BJ (cell line): ENCODE measurements at regions of chr9 and their contacts with region 1.

Region 1: DNA sequence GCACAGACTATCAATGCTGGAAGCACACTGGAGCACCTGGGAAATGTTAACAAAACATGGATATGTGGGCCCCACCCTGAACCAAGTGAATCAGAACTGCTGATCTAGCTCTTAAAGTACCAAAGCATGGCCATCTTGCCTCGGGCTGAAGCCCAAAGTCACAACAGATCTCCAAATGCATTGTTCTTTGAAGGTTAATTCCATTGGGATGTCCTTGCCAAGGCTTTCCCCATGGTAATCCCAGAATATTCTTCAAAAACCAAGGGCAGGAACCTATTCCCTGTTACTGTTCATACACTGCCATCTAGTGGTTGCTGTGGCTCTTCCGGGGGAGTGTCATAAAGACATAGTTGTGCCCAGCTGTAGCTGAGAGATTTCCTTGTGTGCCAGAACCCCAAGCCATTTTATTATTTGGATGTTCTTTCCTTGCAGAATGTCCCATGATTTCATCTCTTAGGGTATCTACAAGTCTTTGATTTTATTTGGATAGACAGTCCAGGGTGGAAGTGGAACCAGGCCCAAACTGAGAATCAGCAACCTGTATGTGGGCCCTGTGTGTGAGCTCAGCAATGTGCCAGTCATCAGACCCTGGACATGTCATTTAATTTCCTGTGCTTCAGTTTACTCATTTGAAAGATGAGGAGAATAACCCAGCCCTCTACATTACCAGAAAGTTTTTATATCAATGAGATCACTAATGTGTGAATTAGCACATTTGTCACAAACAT is 290.0 kb downstream of the ACTL7B start:
- DNase-seq: peak; percentile 39
- H3K4me3 ChIP-seq: no peak overlapping the region
- H3K27me3 ChIP-seq: no peaks in the 10 kb centered on the region; the same call in 1 of the 2 replicates
- CTCF ChIP-seq: peak; percentile 84

Region 2: DNA sequence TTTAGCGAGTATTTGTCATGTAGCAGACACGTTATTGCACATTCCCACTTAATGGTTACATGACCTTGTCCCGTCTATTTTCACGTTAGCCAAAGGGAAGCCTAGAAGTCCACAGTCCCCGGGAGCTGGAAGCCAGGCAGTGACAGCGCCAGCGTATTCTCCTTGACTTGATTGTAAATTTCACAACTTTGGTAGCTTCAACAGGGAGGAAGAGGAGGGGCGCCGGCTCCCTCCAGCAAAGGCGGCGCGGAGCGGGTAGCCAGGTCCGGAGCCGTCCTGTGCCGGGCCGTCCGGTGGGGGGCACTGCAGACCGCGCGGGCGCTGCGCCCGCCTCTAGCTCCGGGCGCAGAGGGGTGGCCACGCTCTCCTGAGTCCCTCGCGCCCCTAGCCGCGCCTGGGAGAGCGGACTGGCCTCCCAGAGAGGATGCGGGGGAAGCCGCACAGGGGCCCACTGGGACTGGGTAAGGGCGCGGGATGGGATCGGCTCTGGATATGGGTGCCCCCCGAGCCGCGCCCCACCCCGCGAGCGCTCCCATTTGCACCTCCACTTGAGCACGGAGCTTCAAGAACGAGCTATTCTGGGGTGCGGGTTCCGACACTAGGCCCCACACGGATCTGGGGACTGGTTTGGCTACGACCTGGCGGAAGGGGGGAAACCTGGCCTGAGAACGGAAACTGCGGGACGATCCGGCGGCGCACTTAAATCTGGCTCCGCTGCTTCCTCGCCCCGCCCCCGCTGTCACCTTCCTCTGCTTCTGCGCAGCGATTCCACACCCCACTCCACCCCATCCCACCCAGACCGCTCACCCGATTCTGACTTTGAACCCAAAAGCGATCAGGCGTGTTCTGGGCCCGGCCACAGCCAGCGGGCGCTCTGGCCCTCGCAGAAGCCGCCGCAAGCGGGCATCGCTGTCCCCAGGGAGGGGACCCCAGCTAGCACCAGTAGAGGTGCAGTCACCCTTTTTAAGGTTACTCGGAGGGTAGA is 1100.1 kb before region 1 on chr9:
- CTCF ChIA-PET with region 1: interaction called, 44 read pairs
- POLR2A ChIA-PET with region 1: no interaction called
- DNase-seq: no peak
- H3K4me3 ChIP-seq: peak overlapping the region; percentile 65
- H3K27me3 ChIP-seq: no peaks in the 10 kb centered on the region
- CTCF ChIP-seq: peak; percentile 69

Region 3: DNA sequence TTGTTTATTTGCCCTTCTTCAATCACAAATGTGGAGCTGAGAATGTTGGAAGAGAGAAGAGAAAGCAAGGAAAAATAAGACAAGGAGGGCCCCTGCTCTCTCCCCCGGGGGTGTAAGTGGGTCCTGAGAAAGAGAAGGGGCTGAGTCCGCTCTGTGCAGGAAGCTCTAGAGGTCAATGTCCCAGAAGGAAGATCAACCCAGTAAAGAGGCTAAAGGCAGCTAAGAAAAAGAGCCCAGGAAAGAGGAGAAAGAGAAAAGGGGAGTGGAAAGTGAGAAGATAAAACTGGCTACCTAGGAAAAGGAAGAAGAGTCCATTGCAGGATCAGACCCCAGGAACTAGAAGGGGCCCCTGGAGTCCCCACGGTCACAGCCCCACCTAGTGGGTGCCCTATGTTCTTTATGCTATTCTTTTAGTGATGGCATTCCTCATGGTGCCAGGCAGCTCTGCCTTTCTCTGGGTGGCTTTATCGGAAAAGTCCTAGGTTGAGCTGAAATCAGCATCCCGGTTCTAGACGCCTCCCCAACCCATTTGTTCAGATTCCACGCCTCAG is 293.4 kb before region 1 on chr9:
- CTCF ChIA-PET with region 1: interaction called, 19 read pairs
- POLR2A ChIA-PET with region 1: no interaction called
- DNase-seq: no peak
- H3K4me3 ChIP-seq: peak overlapping the region; percentile 12; the same call in 1 of the 2 replicates
- H3K27me3 ChIP-seq: no peaks in the 10 kb centered on the region
- CTCF ChIP-seq: peak; percentile 65

Region 4: GRCh38 chr9:108444400-108445358 is 121.1 kb before region 1 on chr9:
- CTCF ChIA-PET with region 1: interaction called, 22 read pairs
- POLR2A ChIA-PET with region 1: no interaction called
- DNase-seq: peak; percentile 93
- H3K4me3 ChIP-seq: peak overlapping the region; percentile 5; the same call in 1 of the 2 replicates
- H3K27me3 ChIP-seq: no peaks in the 10 kb centered on the region
- CTCF ChIP-seq: no peak

Region 5: DNA sequence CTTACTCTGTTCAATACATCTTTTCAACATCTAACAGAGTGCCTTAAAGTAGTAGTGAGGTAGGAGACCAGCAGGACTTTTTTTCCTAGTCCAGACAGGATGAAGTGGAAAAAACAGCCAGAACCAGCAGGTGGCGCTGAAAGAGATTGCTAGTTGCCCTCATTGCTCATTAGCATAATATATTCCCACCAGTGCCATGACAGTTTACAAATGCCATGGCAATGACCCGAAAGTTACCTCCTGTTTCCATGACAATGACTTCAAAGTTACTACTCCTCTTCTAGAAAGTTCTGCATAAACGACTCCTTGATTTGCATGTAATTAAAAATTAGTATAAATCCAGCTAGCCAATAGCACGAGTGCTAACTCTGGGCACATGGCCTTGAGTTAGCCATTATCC is 97.4 kb before region 1 on chr9:
- CTCF ChIA-PET with region 1: interaction called, 12 read pairs
- POLR2A ChIA-PET with region 1: no interaction called
- DNase-seq: no peak
- H3K4me3 ChIP-seq: no peak overlapping the region
- H3K27me3 ChIP-seq: no peaks in the 10 kb centered on the region
- CTCF ChIP-seq: peak; percentile 43

Region 6: GRCh38 chr9:108579757-108580439 is 14.1 kb after region 1 on chr9:
- CTCF ChIA-PET with region 1: no interaction called
- POLR2A ChIA-PET with region 1: no interaction called
- DNase-seq: no peak
- H3K4me3 ChIP-seq: no peak overlapping the region
- H3K27me3 ChIP-seq: peaks cover 2% of the 10 kb centered on the region; the same call in 1 of the 2 replicates
- CTCF ChIP-seq: no peak

Region 7: DNA sequence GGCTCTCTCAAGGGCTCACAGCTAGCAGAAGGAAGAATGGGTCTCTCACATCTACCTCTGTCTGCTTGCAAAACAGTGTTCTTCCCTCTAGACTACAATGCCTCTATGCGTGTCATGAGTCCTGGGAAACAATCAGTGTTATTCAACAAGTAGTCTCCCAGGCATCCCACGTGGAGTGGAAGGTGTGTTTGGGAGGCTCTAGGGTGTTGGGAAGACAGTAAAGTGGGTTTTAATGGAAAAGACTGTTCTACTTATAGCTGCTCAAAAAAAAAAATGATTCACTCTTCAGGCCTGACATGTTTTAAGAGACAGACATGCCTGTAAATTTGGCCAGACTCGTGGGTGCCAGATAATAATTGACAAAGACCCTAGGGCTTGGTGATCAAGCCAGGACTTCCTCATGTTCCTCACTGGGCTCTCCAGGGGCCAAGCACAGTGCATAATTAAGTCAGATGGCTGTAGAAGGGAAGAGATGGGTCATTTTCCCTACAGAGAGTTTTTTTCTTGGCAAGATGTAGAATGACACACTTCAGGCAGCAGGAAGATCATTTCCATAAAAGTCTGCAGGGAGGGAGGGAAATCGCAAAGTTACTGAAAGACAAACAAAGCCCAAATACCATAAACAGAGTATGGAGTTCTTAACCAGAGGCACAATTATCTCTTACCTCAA is 43.5 kb after region 1 on chr9:
- CTCF ChIA-PET with region 1: no interaction called
- POLR2A ChIA-PET with region 1: no interaction called
- DNase-seq: peak; percentile 63
- H3K4me3 ChIP-seq: no peak overlapping the region
- H3K27me3 ChIP-seq: no peaks in the 10 kb centered on the region
- CTCF ChIP-seq: no peak

Region 8: DNA sequence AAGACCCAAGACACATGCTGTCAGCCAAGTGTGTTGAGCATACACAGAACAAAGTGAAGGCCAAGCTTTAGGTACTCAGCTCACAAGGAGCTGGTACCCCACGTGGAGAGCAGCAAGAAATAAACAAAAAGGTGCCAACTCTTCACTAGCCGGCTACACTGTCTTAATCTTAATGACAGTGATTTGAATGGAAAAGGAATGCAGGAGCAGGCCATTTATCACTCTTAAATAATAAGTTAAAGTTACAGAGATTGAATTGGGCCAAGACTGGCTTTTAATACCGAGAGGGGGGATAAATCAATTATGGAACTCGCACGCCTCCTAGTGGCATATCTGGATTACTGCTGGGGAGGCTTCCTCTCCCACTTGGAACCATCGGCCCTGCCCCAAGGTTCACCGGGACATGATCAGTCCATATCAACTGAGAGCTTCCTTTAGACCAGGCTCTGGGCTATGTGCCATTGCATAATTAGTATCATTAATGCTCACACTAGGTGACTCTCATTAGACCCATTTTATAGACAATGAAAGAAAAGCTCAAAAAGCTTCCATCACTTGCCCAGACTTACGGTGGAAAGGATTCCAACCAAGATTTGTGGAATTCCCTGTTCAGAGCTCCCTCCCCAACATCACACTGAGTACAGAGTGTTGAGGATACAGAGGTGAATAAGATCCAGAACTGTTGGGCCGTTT is 196.0 kb after region 1 on chr9:
- CTCF ChIA-PET with region 1: interaction called, 39 read pairs
- POLR2A ChIA-PET with region 1: no interaction called
- DNase-seq: no peak
- H3K4me3 ChIP-seq: no peak overlapping the region
- H3K27me3 ChIP-seq: no peaks in the 10 kb centered on the region; the same call in 1 of the 2 replicates
- CTCF ChIP-seq: peak; percentile 83

Region 9: DNA sequence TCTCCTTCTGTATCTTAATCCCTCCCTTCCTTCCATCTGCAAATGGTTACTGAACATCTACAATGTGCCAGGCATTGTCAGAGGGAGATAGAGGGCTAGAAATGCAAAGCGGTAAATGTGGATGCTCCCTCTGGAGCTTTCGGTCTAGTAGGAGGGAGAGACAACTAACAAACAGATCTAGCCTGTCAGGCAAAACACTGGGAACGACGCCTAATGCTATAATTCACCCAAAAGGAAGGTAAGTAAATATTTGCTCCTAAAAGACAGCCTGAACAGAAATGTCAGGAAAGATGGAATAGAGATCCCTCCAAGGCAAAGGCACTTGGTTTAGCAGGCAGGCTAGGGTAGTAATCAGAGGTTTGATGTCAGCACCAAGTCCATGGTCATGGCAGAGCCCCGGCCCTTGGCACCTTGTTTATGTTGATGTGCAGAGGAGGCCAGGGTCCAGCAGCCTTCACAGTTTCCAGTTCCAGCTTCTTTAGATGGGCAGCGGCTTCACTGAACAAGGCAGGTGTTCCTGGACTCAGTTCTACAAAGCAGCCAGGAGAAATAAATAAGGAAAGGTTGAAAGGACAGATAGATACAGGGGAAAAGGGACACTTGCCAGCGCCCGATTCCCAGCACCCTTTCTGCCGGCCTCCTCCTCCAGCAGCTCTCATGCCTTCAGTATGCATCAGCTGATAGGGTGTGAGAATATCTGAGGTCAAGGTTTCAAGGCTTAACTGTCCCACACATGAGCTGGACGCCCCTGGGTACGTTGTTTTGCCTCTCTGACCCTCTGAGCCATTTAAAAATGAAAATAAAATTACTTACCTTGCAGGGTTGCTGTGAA is 647.7 kb after region 1 on chr9:
- CTCF ChIA-PET with region 1: no interaction called
- POLR2A ChIA-PET with region 1: no interaction called
- DNase-seq: no peak
- H3K4me3 ChIP-seq: no peak overlapping the region
- H3K27me3 ChIP-seq: peaks cover 6% of the 10 kb centered on the region
- CTCF ChIP-seq: no peak